Psoas muscle (tissue), 8 donors: ENCODE measurements at regions of chr15 and their contacts with region 1.

Region 1: GRCh38 chr15:63277038-63277892 is at the start of gene APH1B:
- DNase-seq: peak; percentile 85 to 91
- ATAC-seq: peak; percentile 89 to 94 (median 91)
- H3K4me3 ChIP-seq: peak within 1 kb of the TSS; percentile 91
- H3K27ac ChIP-seq: peak within 1 kb of the TSS; percentile 84
- H3K4me1 ChIP-seq: no peaks in the 10 kb centered on the region
- H3K27me3 ChIP-seq: no peaks in the 10 kb centered on the region
- CTCF ChIP-seq: no peak
- total RNA-seq, gene APH1B: 3.8 to 7.0 (median 4.6) TPM

Region 2: GRCh38 chr15:63157118-63157843 is 120.0 kb before region 1 on chr15 and contains the start of gene RPS27L:
- intact Hi-C with region 1: loop called in 1 of 2 experiments (anchors 10 kb)
- DNase-seq: peak; percentile 91 to 94
- ATAC-seq: peak; percentile 91 to 94 (median 93)
- H3K4me3 ChIP-seq: peak within 1 kb of the TSS; percentile 93
- H3K27ac ChIP-seq: peak within 1 kb of the TSS; percentile 99
- H3K4me1 ChIP-seq: peaks cover 18% of the 10 kb centered on the region
- H3K27me3 ChIP-seq: no peaks in the 10 kb centered on the region
- CTCF ChIP-seq: no peak
- total RNA-seq, gene RPS27L: 97.0 to 169 (median 132) TPM

Region 3: GRCh38 chr15:63191895-63192618 is 85.2 kb before region 1 on chr15:
- intact Hi-C with region 1: loop called in 1 of 2 experiments (anchors 5 kb)
- DNase-seq: no peak
- ATAC-seq: no peak
- H3K4me3 ChIP-seq: no peak overlapping the region
- H3K27ac ChIP-seq: no peak overlapping the region
- H3K4me1 ChIP-seq: peaks cover 26% of the 10 kb centered on the region
- H3K27me3 ChIP-seq: no peaks in the 10 kb centered on the region
- CTCF ChIP-seq: no peak